ENCODE measurements at regions of chrX and their contacts with region 1.

Region 1: GRCh38 chrX:11967986-11968859 is 170.1 kb upstream of the FRMPD4 start:
- DNase-seq: peak; percentile 72 to 93
- H3K4me3 ChIP-seq: no peak overlapping the region
- H3K27ac ChIP-seq: peak overlapping the region; percentile 92
- H3K4me1 ChIP-seq: peaks cover 37% of the 10 kb centered on the region
- H3K27me3 ChIP-seq: no peaks in the 10 kb centered on the region
- CTCF ChIP-seq: no peak

Region 2: GRCh38 chrX:11758400-11759171 is 209.6 kb before region 1 on chrX:
- CTCF ChIA-PET with region 1: no interaction called
- POLR2A ChIA-PET with region 1: no interaction called
- intact Hi-C with region 1: loop called (anchors 10 kb)
- DNase-seq: peak; percentile 49 to 82
- H3K4me3 ChIP-seq: peak overlapping the region; percentile 93
- H3K27ac ChIP-seq: no peak overlapping the region; the same call in 1 of the 2 replicates
- H3K4me1 ChIP-seq: peaks cover 13% of the 10 kb centered on the region
- H3K27me3 ChIP-seq: no peaks in the 10 kb centered on the region
- CTCF ChIP-seq: peak; percentile 55

Region 3: DNA sequence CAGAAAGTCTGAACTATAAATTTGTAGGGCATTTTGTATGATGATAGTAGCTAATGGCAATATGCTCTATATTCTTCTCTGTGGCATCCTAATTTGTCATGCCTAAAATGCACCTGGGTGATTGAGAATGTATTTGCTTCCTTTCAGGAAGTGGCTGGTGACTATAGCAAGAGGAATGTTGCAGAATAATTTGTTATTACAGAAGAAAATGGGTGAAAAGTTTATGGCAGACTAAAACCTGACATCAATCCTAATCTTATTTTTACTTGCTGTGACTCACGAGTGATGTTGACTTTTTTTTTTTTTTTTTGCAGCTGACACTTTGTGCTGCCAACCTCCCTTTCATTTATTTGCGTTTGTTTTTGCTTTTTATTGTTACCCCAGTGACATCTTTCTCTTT is 69.1 kb before region 1 on chrX:
- CTCF ChIA-PET with region 1: no interaction called
- POLR2A ChIA-PET with region 1: interaction called, 6 read pairs
- intact Hi-C with region 1: loop called (anchors 1 kb)
- DNase-seq: peak; percentile 5 to 89
- H3K4me3 ChIP-seq: no peak overlapping the region; the same call in 1 of the 2 replicates
- H3K27ac ChIP-seq: peak overlapping the region; percentile 83
- H3K4me1 ChIP-seq: peaks cover 29% of the 10 kb centered on the region
- H3K27me3 ChIP-seq: no peaks in the 10 kb centered on the region
- CTCF ChIP-seq: no peak

Region 4: DNA sequence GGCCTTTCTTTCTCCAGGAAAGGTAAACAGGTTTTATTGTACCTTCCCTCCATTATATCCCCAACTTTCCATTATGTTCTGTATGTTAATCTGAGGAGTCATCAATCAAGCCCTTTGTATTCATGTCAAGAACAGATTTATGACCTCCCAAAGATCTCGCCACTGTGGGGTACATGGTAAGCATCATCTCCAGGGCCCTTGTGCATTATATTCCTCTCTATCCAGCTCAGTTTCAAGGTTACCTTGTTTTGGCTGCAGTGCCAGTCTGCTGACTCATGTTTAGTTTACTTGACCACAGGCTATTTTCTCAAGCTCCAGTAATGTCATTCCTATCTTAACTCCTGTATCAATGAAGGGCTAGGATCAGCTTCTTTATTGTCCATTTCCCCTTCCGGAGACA is 45.0 kb after region 1 on chrX:
- CTCF ChIA-PET with region 1: no interaction called
- POLR2A ChIA-PET with region 1: no interaction called
- intact Hi-C with region 1: loop called (anchors 2 kb)
- DNase-seq: peak; percentile 8 to 43
- H3K4me3 ChIP-seq: no peak overlapping the region
- H3K27ac ChIP-seq: peak overlapping the region; percentile 23
- H3K4me1 ChIP-seq: peaks cover under 1% of the 10 kb centered on the region; the same call in 1 of the 2 replicates
- H3K27me3 ChIP-seq: no peaks in the 10 kb centered on the region
- CTCF ChIP-seq: no peak

Region 5: DNA sequence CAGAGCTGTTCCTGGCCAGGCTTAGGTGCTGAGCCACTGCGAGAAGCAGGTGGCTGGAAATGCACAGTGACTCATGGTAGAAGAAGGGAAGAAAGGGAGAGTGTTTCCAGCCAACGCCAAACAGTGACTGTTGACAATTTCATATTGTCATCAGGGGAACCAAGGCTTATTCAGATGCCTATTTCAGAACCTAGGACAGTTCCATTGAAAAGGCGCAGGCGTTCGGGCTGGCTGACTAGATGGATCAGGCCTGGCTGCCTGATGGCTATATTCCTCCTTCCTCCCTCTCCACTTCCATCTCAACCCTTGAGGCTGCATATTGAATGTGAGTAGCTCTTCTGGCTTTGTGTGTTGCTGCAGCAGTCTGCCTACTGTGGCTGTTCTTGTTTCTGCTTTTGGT is 97.0 kb after region 1 on chrX:
- CTCF ChIA-PET with region 1: no interaction called
- POLR2A ChIA-PET with region 1: no interaction called
- intact Hi-C with region 1: loop called (anchors 5 kb)
- DNase-seq: peak; percentile 8 to 39
- H3K4me3 ChIP-seq: no peak overlapping the region
- H3K27ac ChIP-seq: no peak overlapping the region
- H3K4me1 ChIP-seq: no peaks in the 10 kb centered on the region
- H3K27me3 ChIP-seq: no peaks in the 10 kb centered on the region
- CTCF ChIP-seq: no peak